PC-9 (cell line): ENCODE measurements at regions of chr9 and their contacts with region 1.

Region 1: DNA sequence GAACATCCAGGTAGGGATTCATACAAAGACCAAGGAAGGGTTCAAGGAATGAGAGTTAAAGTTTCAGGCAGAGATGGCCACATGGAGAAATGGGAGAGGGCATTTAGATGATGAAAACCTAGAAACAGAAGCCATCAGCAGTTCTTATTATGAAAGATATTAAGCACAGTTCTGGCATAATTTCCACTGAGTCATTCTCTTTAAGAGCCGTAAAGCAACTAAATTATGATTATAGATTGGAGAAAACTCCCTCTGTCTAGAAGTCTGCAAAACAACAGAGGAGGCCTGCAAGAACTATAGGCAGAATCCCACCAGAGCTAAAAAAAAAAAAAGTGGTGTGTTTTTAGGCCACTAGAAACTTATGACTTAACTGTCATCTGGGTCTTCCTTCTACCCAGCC is 157.1 kb upstream of the MPDZ start:
- DNase-seq: no peak
- H3K4me3 ChIP-seq: no peak overlapping the region
- H3K27ac ChIP-seq: no peak overlapping the region
- H3K4me1 ChIP-seq: no peaks in the 10 kb centered on the region
- H3K27me3 ChIP-seq: no peaks in the 10 kb centered on the region
- CTCF ChIP-seq: no peak

Region 2: DNA sequence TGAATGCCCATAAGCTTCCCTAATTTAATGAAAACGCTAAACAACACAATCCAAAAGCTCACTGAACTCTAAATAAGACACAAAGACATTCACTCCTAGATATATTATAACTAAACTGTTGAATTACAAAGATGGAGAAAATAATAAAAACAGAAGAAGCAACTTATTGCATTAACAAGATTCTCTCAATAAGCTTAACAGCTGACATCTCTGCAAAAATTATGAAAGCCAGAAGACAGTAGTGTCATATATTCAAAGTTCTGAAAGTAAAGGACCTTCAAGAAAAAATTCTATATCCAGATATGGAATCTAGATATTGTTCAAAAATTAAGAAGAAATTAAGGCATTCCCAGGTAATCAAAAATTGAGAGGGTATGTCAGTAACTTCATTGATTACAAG is 1701.2 kb before region 1 on chr9:
- CTCF ChIA-PET with region 1: no interaction called
- POLR2A ChIA-PET with region 1: interaction called, 14 read pairs
- intact Hi-C with region 1: no loop called
- DNase-seq: no peak
- H3K4me3 ChIP-seq: no peak overlapping the region
- H3K27ac ChIP-seq: no peak overlapping the region
- H3K4me1 ChIP-seq: no peaks in the 10 kb centered on the region
- H3K27me3 ChIP-seq: no peaks in the 10 kb centered on the region
- CTCF ChIP-seq: no peak

Region 3: GRCh38 chr9:13358128-13358527 is 78.5 kb before region 1 on chr9:
- CTCF ChIA-PET with region 1: no interaction called
- POLR2A ChIA-PET with region 1: no interaction called
- intact Hi-C with region 1: no loop called
- DNase-seq: no peak
- H3K4me3 ChIP-seq: no peak overlapping the region
- H3K27ac ChIP-seq: no peak overlapping the region
- H3K4me1 ChIP-seq: no peaks in the 10 kb centered on the region
- H3K27me3 ChIP-seq: no peaks in the 10 kb centered on the region
- CTCF ChIP-seq: no peak